Sciatic nerve (tissue), 2 donors: ENCODE measurements at regions of chr11 and their contacts with region 1.

Region 1: GRCh38 chr11:108199446-108200321 is 22.8 kb downstream of the NPAT start:
- DNase-seq: no peak
- ATAC-seq: no peak

Region 2: DNA sequence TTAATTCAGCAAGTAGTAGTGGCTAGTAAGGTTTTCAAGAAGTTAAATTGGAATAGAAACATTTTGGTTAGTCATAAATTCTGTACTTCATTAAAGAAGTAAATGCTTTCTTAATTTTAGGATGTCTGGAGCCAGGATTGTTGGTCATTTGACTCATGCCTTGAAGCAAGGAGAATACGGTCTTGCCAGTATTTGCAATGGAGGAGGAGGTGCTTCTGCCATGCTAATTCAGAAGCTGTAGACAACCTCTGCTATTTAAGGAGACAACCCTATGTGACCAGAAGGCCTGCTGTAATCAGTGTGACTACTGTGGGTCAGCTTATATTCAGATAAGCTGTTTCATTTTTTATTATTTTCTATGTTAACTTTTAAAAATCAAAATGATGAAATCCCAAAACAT is 52.5 kb before region 1 on chr11:
- intact Hi-C with region 1: loop called (anchors 10 kb)
- DNase-seq: no peak
- ATAC-seq: no peak

Region 3: DNA sequence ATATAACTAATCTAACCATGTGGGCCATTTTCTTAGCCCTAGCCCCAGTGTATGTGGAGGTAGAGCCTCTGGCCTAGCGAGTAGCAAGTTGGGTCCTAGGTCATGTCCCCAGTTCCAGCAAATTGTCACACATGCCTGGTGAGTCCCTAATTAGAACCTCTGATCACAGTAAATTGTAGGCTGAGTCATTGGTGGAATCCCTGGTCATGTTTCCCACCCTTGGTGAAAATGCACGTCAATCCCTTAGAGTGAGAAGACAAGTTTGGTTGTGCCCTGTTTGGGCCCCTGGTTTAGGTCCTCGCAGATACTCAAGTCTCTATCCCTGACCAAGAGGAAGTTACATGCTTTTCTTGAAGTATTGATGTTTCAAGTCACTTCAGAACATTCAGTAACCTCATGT is 69.9 kb after region 1 on chr11:
- intact Hi-C with region 1: no loop called
- DNase-seq: no peak
- ATAC-seq: no peak